Cardiac septum (tissue), 1 donor: ENCODE measurements at regions of chr7 and their contacts with region 1.

Region 1: GRCh38 chr7:157138424-157139110 is at the start of gene UBE3C:
- DNase-seq: peak; percentile 95
- total RNA-seq, gene UBE3C: 50.8 TPM

Region 2: DNA sequence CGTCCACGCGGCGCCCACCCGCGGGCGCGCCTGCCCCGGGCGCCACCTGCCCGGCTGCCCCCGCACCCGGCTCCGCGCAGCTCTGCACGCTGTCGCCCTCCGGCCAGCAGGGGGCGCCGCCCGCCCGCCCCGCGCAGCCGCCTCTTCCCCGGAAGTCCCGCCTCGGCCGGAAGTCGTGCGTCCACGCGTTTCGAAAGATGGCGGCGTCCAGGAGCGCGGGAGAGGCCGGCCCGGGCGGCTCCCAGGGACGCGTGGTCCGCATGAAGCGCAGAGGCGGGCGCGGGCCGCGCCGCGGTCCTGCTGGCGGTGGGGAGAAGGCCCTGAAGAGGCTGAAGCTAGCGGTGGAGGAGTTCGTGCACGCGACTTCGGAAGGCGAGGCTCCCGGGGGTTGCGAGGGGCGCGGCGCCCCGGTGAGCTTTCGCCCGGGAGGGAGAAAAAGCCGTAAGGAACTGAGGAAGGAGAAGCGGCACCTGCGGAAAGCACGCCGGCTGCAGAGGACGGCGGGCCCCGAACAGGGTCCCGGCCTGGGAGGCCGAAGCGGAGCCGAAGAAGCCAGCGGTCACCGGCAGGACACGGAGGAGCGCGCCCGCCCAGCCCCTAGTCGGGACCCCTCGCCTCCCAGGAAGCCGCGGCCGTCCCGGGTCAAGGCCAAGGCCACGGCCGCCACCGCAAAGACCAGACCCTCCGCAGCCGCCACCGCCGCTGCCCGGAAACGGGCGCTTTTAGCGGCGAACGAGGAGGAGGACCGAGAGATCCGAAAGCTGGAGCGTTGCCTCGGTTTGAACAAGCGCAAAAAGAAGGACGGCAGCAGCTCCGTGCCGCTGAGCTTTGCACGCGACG is 188.8 kb before region 1 on chr7 and contains the start of gene NOM1:
- intact Hi-C with region 1: loop called (anchors 5 kb)
- DNase-seq: peak; percentile 95
- total RNA-seq, gene NOM1: 13.0 TPM

Region 3: DNA sequence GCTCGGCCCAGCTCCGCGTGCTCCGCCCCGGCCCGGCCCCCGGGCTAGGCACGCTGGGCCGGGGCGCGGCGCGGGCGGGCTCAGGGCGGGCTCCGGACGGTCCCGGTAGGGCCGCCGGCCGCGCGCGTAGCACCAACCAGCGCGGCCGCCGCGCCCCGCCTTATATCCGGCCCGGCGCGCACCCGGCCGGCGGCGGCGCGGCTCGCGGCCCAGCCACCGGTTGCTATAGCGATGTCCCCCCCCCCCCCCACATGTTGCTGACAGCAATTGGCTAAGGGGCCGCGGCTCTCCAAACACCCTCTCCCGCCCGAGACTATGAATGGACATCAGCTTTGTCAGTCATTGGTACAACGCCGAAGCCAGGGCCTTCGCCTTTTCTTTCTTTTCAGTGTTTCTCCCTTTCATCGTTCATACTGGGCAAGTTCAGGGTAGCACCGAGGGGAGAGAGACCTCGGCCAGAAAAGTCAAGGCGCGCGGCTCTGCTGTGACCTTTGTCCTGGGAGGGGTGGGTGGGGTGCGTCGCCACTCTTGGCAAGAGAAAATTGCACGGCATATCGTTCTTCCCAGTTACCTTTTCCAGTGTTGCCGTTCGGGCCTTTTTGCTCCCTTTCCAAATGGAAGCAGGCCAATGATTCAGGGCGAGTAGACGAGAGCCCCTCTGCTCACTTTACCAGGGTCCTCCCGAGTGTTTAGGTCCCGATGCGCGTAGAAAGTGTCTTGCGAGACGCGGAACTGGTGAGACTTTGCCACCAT is 552.4 kb after region 1 on chr7:
- intact Hi-C with region 1: loop called (anchors 10 kb)
- DNase-seq: peak; percentile 62